Gastrocnemius medialis (tissue), 4 donors: ENCODE measurements at regions of chr2 and their contacts with region 1.

Region 1: GRCh38 chr2:18047850-18048249 is 169.4 kb downstream of the KCNS3 start:
- DNase-seq: peak; percentile 42 to 72
- ATAC-seq: peak; percentile 88 to 90
- H3K4me3 ChIP-seq: no peak overlapping the region
- H3K27ac ChIP-seq: peak overlapping the region; percentile 46 to 77 (median 62)
- H3K4me1 ChIP-seq: peaks cover 18 to 24% of the 10 kb centered on the region in 2 donors
- H3K27me3 ChIP-seq: no peaks in the 10 kb centered on the region
- CTCF ChIP-seq: no peak
- POLR2A ChIP-seq: no peak

Region 2: DNA sequence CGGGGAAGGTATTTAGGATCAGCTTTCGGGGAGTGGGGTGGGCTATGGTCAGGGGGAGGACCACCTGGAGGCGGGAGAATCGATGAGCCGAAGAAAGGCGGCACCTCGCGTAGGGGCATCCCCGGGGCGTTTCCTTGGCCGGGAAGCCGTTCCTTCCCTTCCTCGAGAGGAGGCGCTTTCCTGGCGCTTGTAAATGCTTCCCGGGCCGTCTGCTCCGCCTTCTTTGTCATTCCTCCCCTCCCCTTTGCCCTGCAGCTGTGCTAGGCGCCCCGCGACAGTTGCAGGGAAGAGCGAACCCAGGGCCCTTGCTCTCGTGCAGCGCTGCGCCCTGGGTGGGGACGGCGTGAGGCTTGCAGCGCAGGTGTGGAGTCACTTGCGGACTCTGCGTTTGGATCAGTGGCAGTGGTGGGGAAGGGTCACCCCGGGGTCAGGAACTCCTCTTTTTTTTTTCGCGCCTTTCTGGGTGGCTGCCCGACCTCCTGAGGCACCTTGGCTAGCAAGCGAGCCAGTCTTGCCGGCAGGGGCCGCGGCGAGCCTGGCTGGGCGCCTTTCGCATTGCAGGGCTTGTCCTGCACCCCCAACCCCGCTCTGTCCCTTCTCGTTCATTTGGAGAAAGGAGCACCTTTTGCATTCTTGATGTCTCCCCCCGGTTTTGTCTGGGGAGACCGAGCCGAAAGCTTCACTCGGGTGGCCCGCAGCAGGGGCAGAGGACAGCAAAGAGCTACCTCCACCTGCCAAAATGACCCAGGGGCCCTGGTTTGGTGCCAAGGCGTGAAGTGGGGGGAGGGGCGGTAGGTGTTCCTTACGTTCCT is 168.5 kb before region 1 on chr2:
- in situ Hi-C with region 1: no loop called
- intact Hi-C with region 1: loop called (anchors 2 kb)
- DNase-seq: peak; percentile 73 to 79
- ATAC-seq: peak; percentile 82 to 83
- H3K4me3 ChIP-seq: peak overlapping the region; percentile 82 to 98 (median 94)
- H3K27ac ChIP-seq: peak overlapping the region; percentile 83 to 98 (median 92)
- H3K4me1 ChIP-seq: peaks cover 20 to 30% of the 10 kb centered on the region in 2 donors
- H3K27me3 ChIP-seq: no peaks in the 10 kb centered on the region
- CTCF ChIP-seq: peak; percentile 7 to 58 (median 36)
- POLR2A ChIP-seq: no peak

Region 3: GRCh38 chr2:17995593-17995992 is 52.3 kb before region 1 on chr2:
- in situ Hi-C with region 1: no loop called
- intact Hi-C with region 1: no loop called
- DNase-seq: no peak
- ATAC-seq: no peak
- H3K4me3 ChIP-seq: no peak overlapping the region
- H3K27ac ChIP-seq: no peak overlapping the region
- H3K4me1 ChIP-seq: no peaks in the 10 kb centered on the region
- H3K27me3 ChIP-seq: no peaks in the 10 kb centered on the region
- CTCF ChIP-seq: no peak
- POLR2A ChIP-seq: no peak

Region 4: GRCh38 chr2:18067588-18068384 is 19.9 kb after region 1 on chr2:
- in situ Hi-C with region 1: no loop called
- intact Hi-C with region 1: no loop called
- DNase-seq: no peak
- ATAC-seq: no peak
- H3K4me3 ChIP-seq: no peak overlapping the region
- H3K27ac ChIP-seq: no peak overlapping the region
- H3K4me1 ChIP-seq: peaks cover 29 to 32% of the 10 kb centered on the region in 2 donors
- H3K27me3 ChIP-seq: no peaks in the 10 kb centered on the region
- CTCF ChIP-seq: no peak
- POLR2A ChIP-seq: no peak

Region 5: GRCh38 chr2:18117592-18117991 is 69.7 kb after region 1 on chr2:
- in situ Hi-C with region 1: no loop called
- intact Hi-C with region 1: loop called (anchors 5 kb)
- DNase-seq: peak; percentile 8 to 30
- ATAC-seq: peak; percentile 41 to 73
- H3K4me3 ChIP-seq: no peak overlapping the region
- H3K27ac ChIP-seq: no peak overlapping the region
- H3K4me1 ChIP-seq: peaks cover 11 to 15% of the 10 kb centered on the region in 2 donors
- H3K27me3 ChIP-seq: no peaks in the 10 kb centered on the region
- CTCF ChIP-seq: peak in 4 of 5 experiments; percentile 46 to 57 (median 52)
- POLR2A ChIP-seq: no peak